Heart right ventricle (tissue), 16 donors: ENCODE measurements at regions of chrX and their contacts with region 1.

Region 1: DNA sequence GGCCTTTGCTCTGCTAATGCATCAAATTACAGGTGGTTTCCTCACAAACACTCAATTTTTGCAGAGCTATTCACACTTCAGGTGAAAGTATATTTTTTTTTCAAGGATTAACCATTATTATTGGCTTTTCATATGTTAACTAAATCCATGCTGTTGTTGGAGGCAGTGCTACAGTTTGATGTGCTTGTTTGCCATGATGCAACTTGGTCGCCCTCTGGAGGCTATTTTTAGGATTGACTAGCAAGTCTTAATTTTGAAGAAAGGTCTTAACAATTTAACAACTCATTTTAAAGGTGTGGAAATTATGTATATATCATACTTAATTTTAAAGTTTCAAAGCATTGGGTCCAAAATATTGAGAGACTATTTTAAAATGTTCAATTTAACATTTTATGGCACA is 168.8 kb upstream of the FAM47A start:
- DNase-seq: peak in 1 of 2 donors; percentile 6
- ATAC-seq: no peak
- H3K4me3 ChIP-seq: no peak overlapping the region
- H3K27ac ChIP-seq: no peak overlapping the region
- H3K4me1 ChIP-seq: no peaks in the 10 kb centered on the region
- H3K27me3 ChIP-seq: peaks cover 0 to 6% (median 0%) of the 10 kb centered on the region in 7 donors
- CTCF ChIP-seq: peak in 8 of 9 donors; percentile 12 to 60 (median 50)

Region 2: GRCh38 chrX:32987142-32987541 is 1313.7 kb before region 1 on chrX:
- intact Hi-C with region 1: no loop called
- DNase-seq: peak in 1 of 2 donors; percentile 3
- ATAC-seq: peak; percentile 25 to 93 (median 65)
- H3K4me3 ChIP-seq: no peak overlapping the region
- H3K27ac ChIP-seq: peak overlapping the region in 1 of 10 donors; percentile 37
- H3K4me1 ChIP-seq: peaks cover 0 to 27% (median 0%) of the 10 kb centered on the region in 9 donors
- H3K27me3 ChIP-seq: no peaks in the 10 kb centered on the region
- CTCF ChIP-seq: no peak

Region 3: DNA sequence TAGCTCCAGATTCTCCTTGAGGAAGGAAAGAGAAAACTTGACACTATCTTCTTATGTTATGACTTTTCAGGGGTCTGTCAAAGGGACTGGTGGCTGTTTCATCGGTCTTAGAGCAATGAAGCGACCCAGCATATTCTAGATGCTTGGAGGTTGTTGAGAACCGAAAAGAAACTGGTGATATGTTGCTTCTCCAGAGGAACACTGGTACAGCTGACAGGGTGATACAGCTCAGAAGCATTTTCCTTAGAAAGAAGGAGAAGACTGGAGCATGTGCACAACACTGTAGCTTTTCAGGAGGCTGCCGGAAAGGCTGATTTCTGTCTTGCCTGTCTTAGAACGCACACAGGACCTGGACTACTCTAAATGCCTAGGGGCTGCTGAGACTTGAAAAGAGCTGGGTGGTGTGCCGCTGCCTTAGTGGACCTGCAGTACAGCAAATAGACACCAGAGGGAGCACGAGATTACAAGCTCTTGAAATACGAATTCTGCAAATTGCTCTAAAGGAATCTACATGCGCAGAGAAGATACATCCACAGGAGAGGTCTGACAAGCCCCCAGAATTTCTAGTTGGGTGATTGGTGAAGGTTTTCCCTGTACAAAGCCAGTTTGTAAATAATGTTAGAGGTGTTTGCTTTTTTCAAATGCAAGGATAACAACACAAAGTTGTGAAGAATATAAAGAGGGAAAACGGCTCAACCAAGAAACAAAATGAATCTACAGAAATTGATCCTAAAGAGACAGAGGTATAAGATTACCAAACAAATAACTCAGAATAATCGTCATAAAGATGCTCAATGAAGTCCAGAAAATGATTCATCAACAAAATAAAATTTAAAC is 866.4 kb before region 1 on chrX:
- intact Hi-C with region 1: loop called in 7 of 10 experiments (anchors 5 to 10 kb)
- DNase-seq: peak in 1 of 2 donors; percentile 42
- ATAC-seq: peak in 1 of 8 donors; percentile 42
- H3K4me3 ChIP-seq: peak overlapping the region in 1 of 10 donors; percentile 7
- H3K27ac ChIP-seq: no peak overlapping the region
- H3K4me1 ChIP-seq: no peaks in the 10 kb centered on the region
- H3K27me3 ChIP-seq: peaks cover 0 to 20% (median 0%) of the 10 kb centered on the region in 7 donors
- CTCF ChIP-seq: peak; percentile 35 to 91 (median 69)

Region 4: GRCh38 chrX:34126011-34126410 is 174.9 kb before region 1 on chrX:
- intact Hi-C with region 1: no loop called
- DNase-seq: no peak
- ATAC-seq: no peak
- H3K4me3 ChIP-seq: no peak overlapping the region
- H3K27ac ChIP-seq: no peak overlapping the region
- H3K4me1 ChIP-seq: no peaks in the 10 kb centered on the region
- H3K27me3 ChIP-seq: no peaks in the 10 kb centered on the region
- CTCF ChIP-seq: no peak